Activated T-helper 2 cell treated with anti-CD3 and anti-CD28 coated beads, Interferon-gamma antibody, Interleukin-2, Interleukin-4, amounts not matched to agents 10 μg/mL and 5 μg/mL and 100 μg/mL, durations not matched to agents 14 hours and 24 hours and 36 hours (primary cell): ENCODE measurements at regions of chr6 and their contacts with region 1.

Region 1: DNA sequence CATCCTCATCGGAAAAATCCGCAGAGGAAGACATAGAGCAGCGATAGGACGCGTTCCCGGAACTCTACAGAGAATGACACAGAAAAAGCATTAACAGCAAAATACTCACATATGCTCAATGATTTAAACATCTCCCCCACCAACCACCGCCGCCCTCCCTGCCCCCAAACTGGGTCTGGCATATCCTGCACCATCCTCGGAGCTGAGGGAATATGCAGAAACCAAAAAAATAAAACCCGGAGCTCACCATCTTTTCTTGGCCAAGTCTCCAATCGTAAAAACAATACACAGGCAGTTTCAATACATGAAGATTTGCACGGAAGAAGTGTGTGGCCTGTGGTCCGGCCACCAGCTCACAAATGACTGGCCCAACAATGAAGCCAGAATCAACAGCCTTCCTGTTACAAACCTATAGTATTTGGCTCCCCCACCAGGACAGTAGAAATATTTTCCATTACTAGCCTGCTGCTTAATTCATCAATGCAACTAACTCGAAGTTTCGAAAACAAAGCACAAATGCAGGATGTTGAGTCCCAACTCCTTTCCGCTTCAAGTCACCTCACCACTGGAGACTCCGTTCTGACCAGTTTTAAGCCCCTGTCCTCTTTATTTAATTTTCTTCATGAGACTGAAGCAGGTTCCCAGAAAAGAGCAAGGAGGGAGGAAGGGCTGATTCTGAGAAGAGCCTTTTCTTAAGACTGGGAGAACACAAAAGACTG is 103.2 kb upstream of the BEND6 start:
- DNase-seq: peak; percentile 22
- H3K4me3 Mint-ChIP-seq: peak overlapping the region; percentile 84
- H3K27ac Mint-ChIP-seq: peak overlapping the region; percentile 73
- H3K4me1 Mint-ChIP-seq: peaks cover 26% of the 10 kb centered on the region
- H3K27me3 Mint-ChIP-seq: peaks cover 29% of the 10 kb centered on the region

Region 2: DNA sequence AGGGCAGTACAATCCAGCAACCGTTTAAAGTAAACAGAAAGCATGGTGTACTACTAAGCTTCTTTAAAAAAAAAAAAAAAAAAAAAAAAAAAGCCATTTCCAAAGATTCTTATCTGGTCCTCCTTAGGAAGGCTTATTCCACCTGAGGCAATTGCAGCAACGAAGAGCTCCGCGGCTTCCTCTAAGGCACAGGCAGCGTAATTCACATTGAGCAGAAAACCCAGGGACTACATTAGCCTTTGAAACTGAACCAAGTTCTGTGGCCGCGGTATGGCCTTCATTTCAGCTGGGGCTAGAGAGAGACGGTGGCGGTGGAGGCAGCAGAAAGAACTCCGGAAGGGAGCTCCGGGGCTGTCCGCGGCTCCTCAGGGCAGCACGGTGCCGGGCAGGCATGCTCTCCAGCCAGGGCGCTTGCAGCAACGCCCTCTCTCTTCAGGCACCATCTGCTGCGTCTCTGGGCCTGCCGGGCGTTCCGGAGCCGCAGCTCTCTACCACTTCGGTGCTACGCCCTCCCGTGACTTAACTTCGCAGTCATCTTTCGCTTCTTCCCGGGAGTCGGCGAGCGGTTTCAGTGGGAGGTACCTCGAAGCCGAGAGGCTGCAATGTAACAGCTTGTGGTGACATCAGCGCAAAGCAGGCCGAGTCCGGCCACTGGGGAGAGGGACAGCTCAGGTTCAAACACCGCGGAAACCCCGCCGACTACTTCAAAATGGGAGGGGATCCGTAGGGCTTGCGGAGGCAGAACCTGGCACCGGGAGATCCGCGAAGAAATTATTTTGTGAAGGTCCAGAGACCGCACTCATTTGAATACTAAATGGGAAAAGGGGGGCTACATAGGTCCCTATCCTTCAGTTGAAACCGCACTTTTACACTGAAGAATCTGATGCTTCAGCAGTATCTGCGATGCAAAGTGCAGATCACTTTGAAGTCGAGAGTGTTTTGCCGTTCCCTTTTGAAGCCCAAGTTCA is 309.1 kb before region 1 on chr6:
- intact Hi-C with region 1: loop called (anchors 1 kb)
- DNase-seq: peak; percentile 70
- H3K4me3 Mint-ChIP-seq: no peak overlapping the region
- H3K27ac Mint-ChIP-seq: no peak overlapping the region
- H3K4me1 Mint-ChIP-seq: peaks cover 2% of the 10 kb centered on the region
- H3K27me3 Mint-ChIP-seq: peaks cover 3% of the 10 kb centered on the region

Region 3: DNA sequence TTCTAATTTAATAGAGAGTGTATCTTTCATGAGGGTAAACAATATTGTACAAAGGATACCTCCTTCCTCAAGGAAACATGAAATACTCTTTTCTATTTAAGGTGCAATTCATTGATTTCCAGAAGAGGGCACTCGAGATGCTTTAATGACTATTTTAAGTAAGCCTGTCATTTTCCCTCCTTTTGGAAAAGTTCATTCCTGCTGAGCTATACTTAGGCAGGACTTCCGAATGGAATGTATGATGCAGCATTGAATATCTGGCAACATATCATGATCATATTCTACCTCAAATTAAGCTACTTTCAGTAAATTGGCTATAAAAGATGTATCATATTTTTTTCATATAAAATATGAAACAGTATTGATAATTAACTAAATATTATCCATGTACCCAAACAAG is 214.1 kb before region 1 on chr6:
- intact Hi-C with region 1: loop called (anchors 5 kb)
- DNase-seq: no peak
- H3K4me3 Mint-ChIP-seq: no peak overlapping the region
- H3K27ac Mint-ChIP-seq: no peak overlapping the region
- H3K4me1 Mint-ChIP-seq: no peaks in the 10 kb centered on the region
- H3K27me3 Mint-ChIP-seq: no peaks in the 10 kb centered on the region

Region 4: GRCh38 chr6:56708810-56709597 is 142.7 kb before region 1 on chr6:
- intact Hi-C with region 1: loop called (anchors 2 kb)
- DNase-seq: no peak
- H3K4me3 Mint-ChIP-seq: no peak overlapping the region
- H3K27ac Mint-ChIP-seq: no peak overlapping the region
- H3K4me1 Mint-ChIP-seq: no peaks in the 10 kb centered on the region
- H3K27me3 Mint-ChIP-seq: peaks cover 2% of the 10 kb centered on the region